HCT116 (cell line): ENCODE measurements at regions of chr2 and their contacts with region 1.

Region 1: GRCh38 chr2:101846973-101847372 is 144.8 kb upstream of the IL1R2 start:
- DNase-seq: no peak
- ATAC-seq: no peak
- H3K4me3 ChIP-seq: no peak overlapping the region
- H3K27ac ChIP-seq: no peak overlapping the region
- H3K4me1 ChIP-seq: no peaks in the 10 kb centered on the region
- H3K27me3 ChIP-seq: no peaks in the 10 kb centered on the region
- CTCF ChIP-seq: no peak
- POLR2A ChIP-seq: no peak
- RAD21 ChIP-seq: no peak

Region 2: GRCh38 chr2:101679037-101679726 is 167.8 kb before region 1 on chr2:
- CTCF ChIA-PET with region 1: no interaction called
- POLR2A ChIA-PET with region 1: no interaction called
- RAD21 ChIA-PET with region 1: no interaction called
- intact Hi-C with region 1: loop called (anchors 5 kb)
- DNase-seq: no peak
- ATAC-seq: no peak
- H3K4me3 ChIP-seq: no peak overlapping the region
- H3K27ac ChIP-seq: no peak overlapping the region
- H3K4me1 ChIP-seq: peaks cover 0 to 6% of the 10 kb centered on the region in 2 experiments; a peak in 2 of 4 replicates
- H3K27me3 ChIP-seq: no peaks in the 10 kb centered on the region
- CTCF ChIP-seq: no peak
- POLR2A ChIP-seq: no peak
- RAD21 ChIP-seq: no peak